ENCODE measurements at regions of chr7 and their contacts with region 1.

Region 1: GRCh38 chr7:52344015-52344414 is 691.4 kb upstream of the POM121L12 start:
- DNase-seq: no peak
- ATAC-seq: no peak
- H3K4me3 ChIP-seq: no peak overlapping the region
- H3K27ac ChIP-seq: no peak overlapping the region
- H3K4me1 ChIP-seq: no peaks in the 10 kb centered on the region
- H3K27me3 ChIP-seq: no peaks in the 10 kb centered on the region
- CTCF ChIP-seq: no peak
- POLR2A ChIP-seq: no peak
- RAD21 ChIP-seq: no peak

Region 2: GRCh38 chr7:52053525-52053924 is 290.5 kb before region 1 on chr7:
- CTCF ChIA-PET with region 1: no interaction called
- POLR2A ChIA-PET with region 1: no interaction called
- dilution Hi-C with region 1: no loop called
- in situ Hi-C with region 1: no loop called
- intact Hi-C with region 1: loop called (anchors 10 kb)
- DNase-seq: no peak
- ATAC-seq: no peak
- H3K4me3 ChIP-seq: no peak overlapping the region
- H3K27ac ChIP-seq: no peak overlapping the region
- H3K4me1 ChIP-seq: no peaks in the 10 kb centered on the region
- H3K27me3 ChIP-seq: no peaks in the 10 kb centered on the region
- CTCF ChIP-seq: no peak
- POLR2A ChIP-seq: no peak
- RAD21 ChIP-seq: no peak

Region 3: GRCh38 chr7:52135403-52135802 is 208.6 kb before region 1 on chr7:
- CTCF ChIA-PET with region 1: no interaction called
- POLR2A ChIA-PET with region 1: no interaction called
- dilution Hi-C with region 1: no loop called
- in situ Hi-C with region 1: no loop called
- intact Hi-C with region 1: no loop called
- DNase-seq: no peak
- ATAC-seq: no peak
- H3K4me3 ChIP-seq: no peak overlapping the region
- H3K27ac ChIP-seq: no peak overlapping the region
- H3K4me1 ChIP-seq: no peaks in the 10 kb centered on the region
- H3K27me3 ChIP-seq: no peaks in the 10 kb centered on the region
- CTCF ChIP-seq: no peak
- POLR2A ChIP-seq: no peak
- RAD21 ChIP-seq: no peak

Region 4: GRCh38 chr7:52482076-52482475 is 138.1 kb after region 1 on chr7:
- CTCF ChIA-PET with region 1: no interaction called
- POLR2A ChIA-PET with region 1: no interaction called
- dilution Hi-C with region 1: no loop called
- in situ Hi-C with region 1: no loop called
- intact Hi-C with region 1: no loop called
- DNase-seq: no peak
- ATAC-seq: no peak
- H3K4me3 ChIP-seq: no peak overlapping the region
- H3K27ac ChIP-seq: no peak overlapping the region
- H3K4me1 ChIP-seq: no peaks in the 10 kb centered on the region
- H3K27me3 ChIP-seq: no peaks in the 10 kb centered on the region
- CTCF ChIP-seq: no peak
- POLR2A ChIP-seq: no peak
- RAD21 ChIP-seq: no peak

Region 5: GRCh38 chr7:52525772-52526341 is 181.8 kb after region 1 on chr7:
- CTCF ChIA-PET with region 1: no interaction called
- POLR2A ChIA-PET with region 1: no interaction called
- dilution Hi-C with region 1: no loop called
- in situ Hi-C with region 1: no loop called
- intact Hi-C with region 1: no loop called
- DNase-seq: no peak
- ATAC-seq: no peak
- H3K4me3 ChIP-seq: no peak overlapping the region
- H3K27ac ChIP-seq: no peak overlapping the region
- H3K4me1 ChIP-seq: no peaks in the 10 kb centered on the region
- H3K27me3 ChIP-seq: no peaks in the 10 kb centered on the region
- CTCF ChIP-seq: no peak
- POLR2A ChIP-seq: no peak
- RAD21 ChIP-seq: no peak